ENCODE measurements at regions of chr5 and their contacts with region 1.

Region 1: DNA sequence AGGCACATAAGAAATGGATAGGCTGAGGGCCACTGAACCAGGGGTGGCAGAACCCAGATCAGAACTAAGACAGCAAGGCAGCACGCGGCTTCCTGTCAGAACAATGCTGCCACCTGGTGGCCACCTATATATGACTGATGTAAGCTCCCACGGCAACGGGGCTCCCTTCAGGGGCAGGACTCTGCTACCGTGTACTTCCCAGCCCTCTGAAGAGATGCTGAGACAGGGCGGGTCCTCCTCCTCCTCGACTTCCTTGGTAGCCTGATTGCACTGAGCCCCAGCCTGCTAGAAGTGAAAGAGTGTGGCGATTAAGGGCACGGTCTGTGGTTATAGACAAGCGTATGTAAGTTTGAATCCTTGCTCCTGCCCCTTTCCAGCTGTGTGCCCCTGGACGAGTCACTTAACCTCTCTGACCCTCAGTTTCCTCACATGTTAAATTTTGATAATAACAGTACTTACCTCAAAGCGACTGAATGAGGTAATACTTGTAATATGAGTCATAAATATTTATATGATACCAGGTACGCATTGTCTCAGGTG is 13.3 kb downstream of the RPS14 start:
- DNase-seq: peak; percentile 72 to 98 (median 92)

Region 2: GRCh38 chr5:150129813-150130492 is 306.3 kb before region 1 on chr5:
- intact Hi-C with region 1: loop called (anchors 10 kb)
- DNase-seq: peak; percentile 59 to 96 (median 72)

Region 3: GRCh38 chr5:150161242-150162141 is 274.7 kb before region 1 on chr5:
- intact Hi-C with region 1: loop called (anchors 10 kb)
- DNase-seq: peak; percentile 68 to 97 (median 86)

Region 4: GRCh38 chr5:150272526-150272925 is 163.7 kb before region 1 on chr5:
- intact Hi-C with region 1: loop called (anchors 5 kb)
- DNase-seq: peak in 4 of 10 donors; percentile 49 to 91 (median 56)

Region 5: DNA sequence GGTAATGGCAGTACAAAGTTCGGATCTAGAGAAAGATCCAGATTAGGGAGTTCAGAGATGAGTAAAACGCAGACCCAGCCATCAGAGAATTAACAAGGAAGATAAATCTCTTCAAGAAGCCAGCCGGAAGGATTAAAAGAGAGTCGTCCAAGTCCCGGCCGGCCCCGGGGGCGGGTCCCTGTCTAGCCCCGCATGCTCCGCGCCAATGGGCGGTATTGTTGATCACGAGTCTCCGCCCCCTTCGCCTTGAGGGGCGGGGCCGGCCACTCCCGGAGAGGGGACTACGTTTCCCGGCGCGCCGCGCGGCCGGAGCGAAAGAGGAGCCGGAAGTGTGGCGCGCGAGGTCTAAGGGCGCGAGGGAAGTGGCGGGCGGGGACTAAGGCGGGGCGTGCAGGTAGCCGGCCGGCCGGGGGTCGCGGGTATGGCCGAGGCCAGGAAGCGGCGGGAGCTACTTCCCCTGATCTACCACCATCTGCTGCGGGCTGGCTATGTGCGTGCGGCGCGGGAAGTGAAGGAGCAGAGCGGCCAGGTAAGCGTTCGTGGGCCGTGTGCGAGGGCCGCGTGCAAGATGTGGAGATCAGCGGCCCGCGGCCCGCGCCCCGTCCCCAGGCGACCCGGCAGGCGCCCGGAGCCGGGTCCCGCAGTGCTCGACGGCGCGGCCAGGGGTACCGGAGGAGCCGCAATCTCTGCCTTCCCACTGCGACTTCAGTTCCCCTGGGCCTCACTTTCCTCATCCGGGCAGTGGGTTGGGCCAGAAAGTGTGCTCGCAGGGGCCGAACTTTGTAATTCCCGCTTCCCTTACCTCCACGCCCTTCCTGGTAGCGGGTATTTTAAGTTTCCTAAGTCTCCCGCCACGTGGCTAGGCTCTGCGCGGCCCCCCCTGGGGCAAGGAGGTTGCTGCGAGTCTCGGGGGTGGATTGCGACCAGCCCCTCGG is 78.6 kb before region 1 on chr5 and contains the start of gene TCOF1:
- intact Hi-C with region 1: loop called (anchors 5 kb)
- DNase-seq: peak; percentile 94 to 100 (median 98)

Region 6: DNA sequence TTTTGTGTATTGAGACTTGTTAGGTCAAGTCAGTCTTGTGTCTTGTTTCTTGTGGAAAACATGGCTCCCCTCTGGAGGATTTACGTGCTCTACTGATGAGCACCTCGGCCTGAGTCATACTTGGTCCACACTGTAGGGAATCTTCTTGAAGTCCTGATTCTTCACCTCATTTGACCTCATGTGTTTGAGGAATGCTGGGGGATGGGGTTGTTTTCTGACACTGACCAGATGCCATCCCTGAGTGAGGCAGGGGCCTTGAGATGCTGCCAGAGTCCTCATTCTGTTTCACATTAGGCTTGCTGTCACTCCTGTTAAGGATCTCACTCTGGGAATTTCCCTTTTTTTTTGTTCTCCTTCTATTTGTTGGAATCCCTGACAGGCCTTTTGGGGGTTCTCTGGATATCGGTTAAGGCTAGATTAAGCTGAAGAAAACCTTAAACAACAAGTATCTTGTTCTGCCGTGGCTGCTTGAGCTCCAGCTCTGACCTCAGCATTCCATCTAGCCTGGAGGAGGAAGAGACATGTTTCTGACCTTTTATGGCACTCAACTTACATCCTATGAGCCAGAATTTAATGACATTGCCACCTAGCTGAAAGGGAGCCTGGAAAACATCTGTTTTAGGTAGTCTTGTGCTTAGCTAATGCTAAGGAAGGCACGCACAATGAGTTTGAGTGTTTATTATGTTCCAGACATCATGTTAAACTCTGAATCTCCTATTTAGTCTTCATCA is 58.1 kb before region 1 on chr5:
- intact Hi-C with region 1: no loop called
- DNase-seq: no peak

Region 7: DNA sequence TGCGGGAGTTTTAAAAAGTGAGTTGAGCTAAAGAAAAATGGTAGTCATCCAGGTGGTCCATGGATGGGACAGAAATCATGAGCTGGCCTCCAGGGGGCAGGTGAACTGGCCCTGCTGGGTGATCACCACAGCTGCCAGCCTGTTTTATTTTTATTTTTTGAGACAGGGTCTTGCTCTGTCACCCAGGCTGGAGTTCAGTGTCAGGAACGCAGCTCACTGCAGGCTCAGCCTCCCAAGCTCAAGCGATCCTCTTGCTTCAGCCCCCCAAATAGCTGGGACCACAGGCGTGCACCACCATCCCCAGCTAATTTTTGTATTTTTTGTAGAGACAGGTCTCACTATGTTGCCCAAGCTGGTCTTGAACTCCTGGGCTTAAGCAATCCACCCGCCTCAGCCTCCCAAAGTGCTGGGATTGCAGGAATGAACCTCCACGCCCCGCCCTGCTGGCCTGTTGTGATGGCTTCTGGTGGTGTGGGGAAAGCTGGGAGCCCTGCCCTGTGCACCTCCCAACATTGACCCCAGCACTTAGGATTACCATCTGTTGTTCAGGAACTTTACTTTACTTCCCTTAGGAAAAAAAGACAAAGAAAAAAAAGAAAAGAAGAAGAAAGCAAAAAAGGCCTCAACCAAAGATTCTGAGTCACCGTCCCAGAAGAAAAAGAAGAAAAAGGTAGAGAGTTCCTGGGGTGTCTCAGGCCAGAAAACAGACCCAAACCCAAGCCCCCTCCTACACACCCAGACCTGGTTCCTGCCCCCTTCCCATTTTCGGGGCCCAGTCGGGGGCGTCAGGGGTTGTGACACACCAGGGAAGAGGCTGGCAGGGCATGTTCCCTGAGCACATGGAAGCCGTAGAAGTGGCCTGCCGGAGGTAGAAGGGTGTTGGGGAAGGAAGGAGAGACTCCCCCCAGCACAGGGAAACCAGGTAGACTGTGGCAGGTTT is 38.2 kb before region 1 on chr5:
- intact Hi-C with region 1: loop called (anchors 2 kb)
- DNase-seq: peak in 1 of 10 donors; percentile 47

Region 8: DNA sequence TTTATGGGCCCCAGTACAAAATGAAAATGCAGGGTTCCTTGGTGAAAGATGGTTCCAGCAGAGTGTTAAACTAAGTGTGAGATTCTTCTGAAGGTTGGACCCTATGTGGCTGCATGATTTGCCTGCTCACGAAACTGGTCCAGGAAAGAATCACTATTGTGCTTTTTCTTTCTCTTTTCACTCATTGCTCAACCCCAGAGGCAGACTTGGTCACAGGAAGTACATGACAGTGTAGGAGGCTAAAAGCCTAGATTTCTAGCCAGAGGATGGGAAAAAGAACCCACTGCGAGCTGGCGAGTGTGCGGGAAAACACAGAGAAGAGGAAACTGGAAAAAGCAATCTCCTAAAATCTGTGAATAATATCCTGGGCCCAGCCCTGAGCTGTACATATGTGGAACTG is 892.5 kb after region 1 on chr5:
- intact Hi-C with region 1: no loop called
- DNase-seq: no peak